K562 (cell line): ENCODE measurements at regions of chr3 and their contacts with region 1.

Region 1: GRCh38 chr3:194003125-194004057 is 132.6 kb upstream of the HES1 start:
- DNase-seq: peak; percentile 92 to 97 (median 96)
- ATAC-seq: peak; percentile 91
- H3K4me3 ChIP-seq: peak overlapping the region; percentile 31; the same call in 1 of the 2 replicates
- H3K27ac ChIP-seq: peak overlapping the region; percentile 81
- H3K4me1 ChIP-seq: peaks cover 31 to 52% of the 10 kb centered on the region in 2 experiments
- H3K27me3 ChIP-seq: no peaks in the 10 kb centered on the region
- CTCF ChIP-seq: no peak
- EP300 ChIP-seq: peak; percentile 91
- POLR2A ChIP-seq: peak; percentile 40; the same call in 1 of the 2 replicates
- RAD21 ChIP-seq: peak; percentile 44 to 45; a peak in 3 of 4 replicates

Region 2: DNA sequence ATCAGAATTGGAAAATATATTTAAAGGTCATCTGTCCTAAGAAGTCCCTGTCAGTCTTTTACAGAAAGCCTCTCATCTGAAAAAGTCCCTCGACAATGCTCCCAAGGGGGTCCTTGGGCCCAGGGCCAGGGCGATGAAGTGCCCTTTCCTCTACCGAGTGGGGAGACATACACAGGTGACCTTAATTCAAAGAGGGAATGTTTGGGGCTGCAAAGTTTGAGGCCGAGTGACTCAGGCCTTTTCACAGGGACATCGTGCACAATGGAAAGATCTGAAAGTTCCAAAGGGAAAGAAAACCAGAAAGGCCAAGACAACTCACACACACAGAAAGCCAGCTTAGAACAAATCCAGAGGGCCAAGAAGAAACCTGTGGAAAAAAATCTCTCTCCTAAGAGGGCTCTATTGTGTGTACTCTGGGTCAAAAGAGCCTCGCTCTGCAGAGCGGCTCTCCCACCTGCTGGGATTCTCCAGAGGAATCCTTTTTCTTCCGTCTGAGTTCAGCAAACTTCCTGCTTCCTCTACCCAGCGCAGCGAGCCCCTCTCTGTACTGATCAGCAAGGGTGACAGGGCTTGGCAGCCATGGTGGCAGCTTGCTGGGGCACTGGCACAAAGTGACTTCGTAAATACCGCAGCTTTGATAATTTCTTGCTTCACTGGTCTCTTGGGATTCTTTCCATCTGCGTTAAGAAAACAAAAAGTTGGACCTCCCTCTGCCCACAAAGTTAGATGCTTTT is 151.3 kb before region 1 on chr3:
- CTCF ChIA-PET with region 1: no interaction called
- POLR2A ChIA-PET with region 1: no interaction called
- in situ Hi-C with region 1: no loop called
- intact Hi-C with region 1: loop called (anchors 5 kb)
- DNase-seq: no peak
- ATAC-seq: no peak; the same call in 1 of the 3 replicates
- H3K4me3 ChIP-seq: no peak overlapping the region
- H3K27ac ChIP-seq: peak overlapping the region; percentile 59
- H3K4me1 ChIP-seq: peaks cover 11 to 53% of the 10 kb centered on the region in 2 experiments; a peak in 4 of 5 replicates
- H3K27me3 ChIP-seq: no peaks in the 10 kb centered on the region
- CTCF ChIP-seq: no peak
- EP300 ChIP-seq: no peak
- POLR2A ChIP-seq: no peak
- RAD21 ChIP-seq: no peak

Region 3: DNA sequence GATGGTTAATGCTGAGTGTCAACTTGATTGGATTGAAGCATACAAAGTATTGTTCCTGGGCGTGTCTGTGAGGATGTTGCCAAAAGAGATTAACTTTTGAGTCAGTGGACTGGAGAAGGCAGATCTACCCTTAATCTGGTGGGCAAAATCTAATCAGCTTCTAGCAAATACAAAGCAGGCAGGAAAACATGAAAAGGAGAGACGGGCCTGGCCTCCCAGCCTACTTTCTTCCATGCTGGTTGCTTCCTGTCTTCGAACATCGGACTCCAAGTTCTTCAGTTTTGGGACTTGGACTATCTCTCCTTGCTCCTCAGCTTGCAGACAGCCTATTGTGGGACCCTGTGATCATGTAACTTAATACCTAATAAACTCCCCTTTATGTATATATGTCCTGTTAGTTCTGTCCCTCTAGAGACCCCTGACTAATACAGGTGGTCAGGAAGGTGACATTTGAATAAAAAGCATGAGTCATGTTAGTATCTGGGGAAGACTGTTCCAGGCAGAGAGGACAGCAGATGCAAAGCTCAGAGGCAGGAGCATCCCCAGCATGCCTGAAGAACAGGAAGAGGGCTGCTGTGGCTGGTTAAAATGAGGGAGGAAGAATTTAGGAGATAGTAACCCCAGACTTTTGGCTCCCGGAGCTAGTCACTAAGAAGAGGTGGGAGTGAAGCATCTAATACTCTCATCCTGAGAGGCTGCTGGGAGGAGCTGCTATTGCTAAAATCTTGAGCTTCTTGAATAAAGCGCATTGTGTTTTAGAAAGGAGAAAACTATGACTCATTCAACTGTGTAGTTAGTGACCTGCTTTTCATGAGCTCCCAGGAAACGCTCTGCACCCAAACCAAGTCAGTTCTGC is 74.8 kb before region 1 on chr3:
- CTCF ChIA-PET with region 1: no interaction called
- POLR2A ChIA-PET with region 1: no interaction called
- in situ Hi-C with region 1: no loop called
- intact Hi-C with region 1: loop called (anchors 5 kb)
- DNase-seq: peak; percentile 37 to 77 (median 42)
- ATAC-seq: peak; percentile 85
- H3K4me3 ChIP-seq: no peak overlapping the region
- H3K27ac ChIP-seq: peak overlapping the region; percentile 67
- H3K4me1 ChIP-seq: peaks cover 16 to 43% of the 10 kb centered on the region in 2 experiments
- H3K27me3 ChIP-seq: no peaks in the 10 kb centered on the region
- CTCF ChIP-seq: no peak
- EP300 ChIP-seq: peak; percentile 91
- POLR2A ChIP-seq: no peak
- RAD21 ChIP-seq: no peak

Region 4: GRCh38 chr3:194051366-194052149 is 48.2 kb after region 1 on chr3:
- CTCF ChIA-PET with region 1: no interaction called
- POLR2A ChIA-PET with region 1: no interaction called
- in situ Hi-C with region 1: no loop called
- intact Hi-C with region 1: no loop called
- DNase-seq: peak in 2 of 4 experiments; percentile 51 to 65
- ATAC-seq: peak; percentile 69
- H3K4me3 ChIP-seq: no peak overlapping the region
- H3K27ac ChIP-seq: no peak overlapping the region
- H3K4me1 ChIP-seq: peaks cover 6 to 10% of the 10 kb centered on the region in 2 experiments; a peak in 4 of 5 replicates
- H3K27me3 ChIP-seq: no peaks in the 10 kb centered on the region
- CTCF ChIP-seq: no peak
- EP300 ChIP-seq: peak; percentile 28; the same call in 1 of the 2 replicates
- POLR2A ChIP-seq: no peak
- RAD21 ChIP-seq: no peak

Region 5: DNA sequence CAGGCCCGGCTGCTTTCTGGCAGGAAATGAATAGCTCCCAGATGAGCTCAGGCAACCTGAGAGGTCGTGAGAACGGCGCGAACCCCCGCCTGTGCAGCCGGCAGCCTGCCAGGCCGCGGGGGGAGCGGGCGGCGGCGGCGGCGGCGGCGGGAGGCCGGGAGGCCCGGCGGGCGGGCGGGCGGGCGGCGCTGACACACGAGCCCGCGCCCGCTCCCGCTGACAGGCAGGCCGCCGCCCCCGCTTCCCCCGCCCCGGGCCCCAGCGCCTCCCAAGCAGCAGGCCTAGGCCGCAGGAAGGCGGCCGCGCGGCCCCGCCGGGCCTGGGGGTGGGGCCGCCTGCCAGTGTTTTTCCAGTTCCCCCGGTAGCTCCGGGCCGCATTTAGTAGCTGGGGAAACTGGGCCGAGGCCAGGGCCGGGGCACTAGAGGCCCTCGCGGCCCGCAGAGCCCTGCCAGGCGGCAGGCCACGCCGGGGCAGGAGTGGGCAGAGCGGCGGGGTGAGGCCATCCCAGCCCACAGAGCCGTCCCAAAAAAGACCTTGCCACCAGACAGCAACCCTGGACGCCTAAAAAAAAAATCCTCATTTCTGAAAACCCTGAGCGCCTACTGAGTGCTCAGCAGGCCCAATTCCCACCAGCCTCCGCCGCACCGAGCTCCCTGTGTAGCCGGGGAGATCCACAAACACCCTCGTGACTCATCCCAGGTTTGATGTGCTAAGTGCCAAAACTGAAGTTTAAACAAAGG is 138.2 kb after region 1 on chr3:
- CTCF ChIA-PET with region 1: no interaction called
- POLR2A ChIA-PET with region 1: interaction called, 17 read pairs
- in situ Hi-C with region 1: no loop called
- intact Hi-C with region 1: loop called (anchors 1 kb)
- DNase-seq: peak; percentile 89 to 91 (median 90)
- ATAC-seq: peak; percentile 71
- H3K4me3 ChIP-seq: peak overlapping the region; percentile 40
- H3K27ac ChIP-seq: peak overlapping the region; percentile 99
- H3K4me1 ChIP-seq: peaks cover 40 to 53% of the 10 kb centered on the region in 2 experiments
- H3K27me3 ChIP-seq: no peaks in the 10 kb centered on the region
- CTCF ChIP-seq: 0 out of 6 replicates have a peak, but pooled peaks of 1 of the 3 experiments have one; percentile 5
- EP300 ChIP-seq: no peak; the same call in 1 of the 2 replicates
- POLR2A ChIP-seq: peak; percentile 75
- RAD21 ChIP-seq: peak; percentile 40 to 47